Right ventricle myocardium inferior (tissue), 1 donor: ENCODE measurements at regions of chr1 and their contacts with region 1.

Region 1: GRCh38 chr1:44237721-44238457 is 24.6 kb downstream of the DMAP1 start:
- DNase-seq: peak; percentile 75
- ATAC-seq: no peak

Region 2: GRCh38 chr1:43991476-43992231 is 246.2 kb before region 1 on chr1 and contains the start of gene CCDC24:
- intact Hi-C with region 1: no loop called
- DNase-seq: peak; percentile 94
- ATAC-seq: peak; percentile 89
- total RNA-seq, gene CCDC24: 0.89 TPM

Region 3: DNA sequence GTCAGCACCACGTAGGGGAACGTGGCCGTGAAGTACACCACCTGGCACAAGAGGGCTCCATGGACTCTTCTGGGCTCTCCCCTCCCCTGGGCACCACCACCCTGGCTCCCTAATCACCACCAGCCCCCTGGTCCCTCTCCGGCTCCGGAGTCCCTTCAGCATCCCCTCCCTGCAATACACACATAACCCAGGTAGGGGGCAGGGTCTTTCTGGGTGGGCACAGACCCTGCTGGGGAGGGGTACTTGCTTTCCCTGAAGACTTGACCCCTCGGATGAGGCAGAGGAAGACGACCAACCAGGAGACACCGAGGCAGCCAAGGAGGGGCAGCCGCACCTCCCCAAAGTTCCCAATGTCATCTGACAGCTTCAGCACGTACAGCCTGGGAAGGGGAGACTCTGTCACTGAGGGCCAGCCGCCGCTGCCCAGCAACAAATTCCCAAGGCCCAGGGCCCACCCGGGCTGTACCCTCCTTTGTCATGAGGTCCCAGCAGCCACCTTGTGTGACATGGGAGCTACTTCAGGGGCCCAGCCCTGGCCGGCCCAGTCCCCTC is 235.2 kb before region 1 on chr1:
- intact Hi-C with region 1: no loop called
- DNase-seq: no peak
- ATAC-seq: no peak

Region 4: GRCh38 chr1:44154047-44154446 is 83.8 kb before region 1 on chr1:
- intact Hi-C with region 1: no loop called
- DNase-seq: no peak
- ATAC-seq: no peak

Region 5: GRCh38 chr1:44294588-44295007 is 56.7 kb after region 1 on chr1:
- intact Hi-C with region 1: loop called (anchors 5 kb)
- DNase-seq: peak; percentile 72
- ATAC-seq: no peak

Region 6: DNA sequence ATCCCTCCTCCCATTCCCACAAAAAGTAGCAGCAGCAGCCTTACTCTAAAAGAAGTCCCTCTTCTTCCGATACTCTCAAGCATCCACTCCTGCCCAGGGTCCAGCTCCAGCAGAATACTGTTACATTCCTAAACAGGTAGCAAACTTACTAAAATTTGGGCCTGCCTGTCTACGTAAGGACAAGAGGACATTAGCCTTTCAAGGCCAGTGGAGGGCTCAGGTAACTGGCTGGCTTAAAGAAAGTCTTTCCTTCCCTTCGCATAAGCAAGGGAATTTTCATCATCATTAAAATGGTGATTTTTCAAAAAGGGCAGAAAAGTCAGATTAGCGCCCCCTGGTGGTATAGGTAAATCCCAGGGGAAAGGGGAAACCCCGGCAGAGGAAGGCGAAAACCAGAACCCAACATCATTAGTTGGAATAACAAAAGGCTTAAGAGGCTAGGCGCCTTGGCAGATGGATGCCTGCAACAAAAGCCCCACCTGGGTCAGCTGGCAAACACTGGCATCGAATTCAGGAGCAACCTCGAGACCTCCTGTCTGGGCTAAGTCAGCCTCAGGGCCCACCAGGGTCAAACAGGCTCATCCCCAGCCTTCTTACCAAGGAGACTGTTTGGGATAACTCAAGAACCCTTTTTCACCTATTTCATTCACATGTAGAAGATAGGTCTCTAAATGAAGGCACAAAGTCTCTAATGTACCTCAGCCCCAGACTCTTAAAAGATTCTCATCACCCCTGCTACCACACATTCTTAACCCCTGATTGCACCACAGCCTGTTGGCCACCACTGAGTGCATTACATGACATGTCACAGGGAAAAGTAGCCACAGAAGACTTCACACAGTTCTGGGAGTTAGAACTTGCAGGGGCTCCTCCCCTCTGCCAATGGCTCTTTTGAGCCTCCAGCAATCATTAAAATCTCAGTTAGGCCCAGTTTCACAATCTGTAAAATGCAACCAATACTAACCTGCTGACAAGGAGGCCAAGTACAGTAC is 80.5 kb after region 1 on chr1:
- intact Hi-C with region 1: loop called (anchors 5 kb)
- DNase-seq: no peak
- ATAC-seq: no peak

Region 7: DNA sequence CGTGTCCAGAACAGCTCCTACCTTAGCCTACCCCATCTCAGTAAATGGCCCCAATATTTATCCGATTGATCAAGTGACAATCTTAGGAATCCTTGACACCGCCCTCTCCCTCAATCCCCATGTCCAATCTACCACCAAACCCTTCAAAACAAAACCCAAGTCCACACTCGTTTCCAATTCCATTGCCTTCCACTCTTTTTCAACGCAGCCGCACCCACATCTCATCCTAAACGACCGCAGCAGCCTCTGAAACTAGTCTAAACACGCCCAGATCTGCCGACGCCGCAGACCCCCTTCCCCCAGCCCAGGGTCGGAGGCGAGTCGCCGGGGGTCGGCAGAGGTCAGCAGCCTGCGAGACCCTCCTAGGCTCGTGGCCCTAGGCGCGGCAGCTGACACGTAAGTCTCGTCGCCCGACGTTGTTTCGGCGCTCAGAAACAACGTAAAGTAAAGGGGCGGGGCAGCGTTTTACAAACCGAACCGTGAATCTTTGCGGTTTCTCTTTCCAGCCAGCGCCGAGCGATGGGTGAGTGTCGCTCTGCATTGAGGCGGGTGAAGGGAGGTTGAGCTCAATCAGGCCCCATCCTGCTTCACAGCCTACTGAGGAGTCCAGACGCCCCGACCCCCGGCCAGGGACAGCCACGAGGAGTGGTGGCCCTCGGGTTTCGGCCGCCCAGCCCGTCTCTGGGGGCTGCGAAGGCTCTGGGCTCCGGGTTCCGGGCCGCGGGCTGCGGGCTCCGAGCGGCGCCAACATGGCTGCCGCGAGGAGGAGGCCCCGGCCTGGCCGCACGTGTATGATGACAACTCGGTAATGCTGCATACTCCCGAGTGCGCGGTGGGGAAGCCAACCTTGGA is 537.4 kb after region 1 on chr1 and contains the start of gene RPS8:
- intact Hi-C with region 1: no loop called
- DNase-seq: peak; percentile 96
- ATAC-seq: peak; percentile 94
- total RNA-seq, gene RPS8: 833 TPM